ENCODE measurements at regions of chr15 and their contacts with region 1.

Region 1: GRCh38 chr15:69244798-69245197 is 53.9 kb upstream of the PAQR5 start:
- DNase-seq: no peak
- ATAC-seq: no peak
- H3K4me3 ChIP-seq: no peak overlapping the region
- H3K27ac ChIP-seq: no peak overlapping the region
- H3K4me1 ChIP-seq: no peaks in the 10 kb centered on the region
- H3K27me3 ChIP-seq: no peaks in the 10 kb centered on the region
- CTCF ChIP-seq: no peak

Region 2: GRCh38 chr15:69160141-69160993 is 84.4 kb before region 1 on chr15 and contains the start of gene GLCE:
- CTCF ChIA-PET with region 1: interaction called, 10 read pairs
- POLR2A ChIA-PET with region 1: no interaction called
- in situ Hi-C with region 1: no loop called
- intact Hi-C with region 1: no loop called
- DNase-seq: peak; percentile 88
- ATAC-seq: peak; percentile 98
- H3K4me3 ChIP-seq: peak within 1 kb of the TSS; percentile 72 to 93
- H3K27ac ChIP-seq: peak within 1 kb of the TSS; percentile 80
- H3K4me1 ChIP-seq: peaks cover 9% of the 10 kb centered on the region
- H3K27me3 ChIP-seq: no peaks in the 10 kb centered on the region
- CTCF ChIP-seq: no peak
- total RNA-seq, gene GLCE: 22.8 TPM

Region 3: DNA sequence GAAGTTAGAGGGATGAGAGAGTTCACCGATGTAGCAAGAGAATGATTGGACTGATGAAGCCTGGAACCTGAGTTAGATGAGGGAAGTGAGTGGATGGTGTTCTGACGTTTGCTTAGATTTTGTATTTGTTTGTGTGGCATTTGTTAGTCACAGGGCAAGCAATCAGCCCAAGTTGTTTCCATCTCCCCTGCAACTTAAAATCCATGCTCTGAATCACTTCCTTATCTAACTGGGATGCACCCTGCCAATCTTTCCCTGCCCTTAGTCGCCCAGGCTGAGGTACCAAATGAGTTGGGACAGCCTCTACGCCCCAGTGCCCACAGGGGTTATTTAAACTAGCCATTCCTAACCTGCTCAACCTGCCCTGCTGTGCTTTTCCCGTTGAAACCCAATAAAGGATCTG is 66.5 kb after region 1 on chr15:
- CTCF ChIA-PET with region 1: no interaction called
- POLR2A ChIA-PET with region 1: no interaction called
- in situ Hi-C with region 1: no loop called
- intact Hi-C with region 1: no loop called
- DNase-seq: no peak
- ATAC-seq: 0 out of 2 replicates have a peak, but pooled peaks have one; percentile 35
- H3K4me3 ChIP-seq: no peak overlapping the region
- H3K27ac ChIP-seq: no peak overlapping the region
- H3K4me1 ChIP-seq: no peaks in the 10 kb centered on the region; the same call in 1 of the 2 replicates
- H3K27me3 ChIP-seq: no peaks in the 10 kb centered on the region
- CTCF ChIP-seq: no peak

Measured in Panc1 (cell line).